H1 (cell line): ENCODE measurements at regions of chr4 and their contacts with region 1.

Region 1: DNA sequence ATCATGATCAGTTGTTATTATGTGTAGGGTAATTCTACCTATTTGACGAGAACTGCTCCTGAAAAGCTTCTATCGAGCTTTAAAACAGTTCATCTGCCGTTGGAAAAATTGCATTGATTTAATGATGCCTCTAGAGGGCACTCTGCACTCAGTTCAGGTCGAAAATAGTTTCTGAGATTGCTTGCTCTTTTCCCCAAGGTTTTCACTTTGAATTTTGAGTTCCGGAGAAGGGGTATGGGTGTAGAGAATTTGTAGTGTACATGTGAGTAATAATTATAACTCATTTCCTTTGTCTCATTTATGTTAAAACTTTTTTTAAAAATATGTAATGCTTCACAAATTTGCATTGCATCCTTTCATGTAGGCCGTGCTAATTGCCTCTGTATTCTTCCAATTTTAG is 28.4 kb upstream of the TNIP3 start:
- DNase-seq: no peak
- H3K4me3 ChIP-seq: no peak overlapping the region
- H3K27ac ChIP-seq: no peak overlapping the region
- H3K4me1 ChIP-seq: peaks cover 0 to 5% (median 0%) of the 10 kb centered on the region in 4 experiments; a peak in 2 of 7 replicates
- H3K27me3 ChIP-seq: no peaks in the 10 kb centered on the region
- CTCF ChIP-seq: peak in 2 of 3 experiments; percentile 70 to 82; a peak in 3 of 4 replicates
- EP300 ChIP-seq: no peak
- POLR2A ChIP-seq: no peak
- RAD21 ChIP-seq: peak; percentile 87 to 90

Region 2: GRCh38 chr4:121050300-121050699 is 142.2 kb before region 1 on chr4:
- CTCF ChIA-PET with region 1: no interaction called
- POLR2A ChIA-PET with region 1: no interaction called
- DNase-seq: no peak
- H3K4me3 ChIP-seq: no peak overlapping the region
- H3K27ac ChIP-seq: no peak overlapping the region
- H3K4me1 ChIP-seq: no peaks in the 10 kb centered on the region
- H3K27me3 ChIP-seq: no peaks in the 10 kb centered on the region
- CTCF ChIP-seq: peak in 1 of 3 experiments; percentile 29; a peak in 1 of 4 replicates
- EP300 ChIP-seq: no peak
- POLR2A ChIP-seq: no peak
- RAD21 ChIP-seq: peak; percentile 15 to 29; a peak in 2 of 4 replicates

Region 3: GRCh38 chr4:121156822-121157769 is 35.4 kb before region 1 on chr4:
- CTCF ChIA-PET with region 1: interaction called, 11 read pairs
- POLR2A ChIA-PET with region 1: interaction called, 4 read pairs
- DNase-seq: peak; percentile 19 to 81
- H3K4me3 ChIP-seq: peak overlapping the region; percentile 23 to 72 (median 60)
- H3K27ac ChIP-seq: no peak overlapping the region
- H3K4me1 ChIP-seq: peaks cover 0 to 5% (median 0%) of the 10 kb centered on the region in 4 experiments; a peak in 2 of 7 replicates
- H3K27me3 ChIP-seq: peaks cover 1 to 8% (median 5%) of the 10 kb centered on the region in 4 experiments; a peak in 5 of 7 replicates
- CTCF ChIP-seq: no peak
- EP300 ChIP-seq: no peak
- POLR2A ChIP-seq: no peak
- RAD21 ChIP-seq: no peak

Region 4: DNA sequence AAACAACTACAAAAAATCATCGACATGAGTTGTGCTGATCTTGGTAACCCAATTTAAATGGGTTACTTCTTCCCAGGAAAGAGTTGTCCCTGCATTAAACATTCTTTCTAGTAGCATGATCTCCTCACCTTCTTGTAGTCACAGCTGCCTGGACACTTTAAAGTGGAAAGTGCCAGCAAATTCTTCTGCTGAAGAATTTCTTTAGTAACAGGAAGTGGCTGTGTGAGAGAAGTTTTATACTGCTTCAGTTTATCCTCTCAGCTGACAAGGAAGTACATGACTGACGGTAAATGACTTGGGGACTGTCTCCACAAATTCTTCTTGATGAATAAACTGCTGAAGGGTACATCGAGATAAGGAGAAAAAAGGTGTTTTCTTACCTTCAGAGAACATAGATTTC is 10.2 kb before region 1 on chr4:
- CTCF ChIA-PET with region 1: interaction called, 22 read pairs
- POLR2A ChIA-PET with region 1: no interaction called
- DNase-seq: no peak
- H3K4me3 ChIP-seq: no peak overlapping the region
- H3K27ac ChIP-seq: no peak overlapping the region
- H3K4me1 ChIP-seq: peaks cover 0 to 6% (median 3%) of the 10 kb centered on the region in 4 experiments; a peak in 2 of 7 replicates
- H3K27me3 ChIP-seq: no peaks in the 10 kb centered on the region
- CTCF ChIP-seq: no peak
- EP300 ChIP-seq: no peak
- POLR2A ChIP-seq: no peak
- RAD21 ChIP-seq: no peak

Region 5: DNA sequence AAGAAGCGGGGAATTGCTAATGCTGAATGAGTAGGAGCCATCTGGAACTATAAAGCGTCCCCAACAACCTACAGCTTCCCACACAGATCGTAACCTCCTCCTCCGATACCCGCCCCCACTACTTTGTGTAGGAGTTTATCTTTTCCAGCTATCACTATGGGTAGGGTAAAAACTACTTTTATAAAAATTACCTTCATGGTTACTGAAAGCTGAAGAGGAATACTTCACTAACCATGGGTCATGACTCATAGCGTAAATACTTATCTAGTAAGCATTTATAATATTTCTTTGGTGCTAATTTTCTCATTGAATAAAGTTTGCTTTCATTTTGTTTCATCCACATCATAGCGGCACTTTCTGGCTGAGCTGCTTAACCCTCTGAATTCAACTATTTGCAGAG is 51.0 kb after region 1 on chr4:
- CTCF ChIA-PET with region 1: interaction called, 65 read pairs
- POLR2A ChIA-PET with region 1: no interaction called
- DNase-seq: no peak
- H3K4me3 ChIP-seq: no peak overlapping the region
- H3K27ac ChIP-seq: no peak overlapping the region
- H3K4me1 ChIP-seq: no peaks in the 10 kb centered on the region
- H3K27me3 ChIP-seq: no peaks in the 10 kb centered on the region
- CTCF ChIP-seq: no peak
- EP300 ChIP-seq: no peak
- POLR2A ChIP-seq: no peak
- RAD21 ChIP-seq: no peak

Region 6: GRCh38 chr4:121307445-121308327 is 115.2 kb after region 1 on chr4:
- CTCF ChIA-PET with region 1: interaction called, 20 read pairs
- POLR2A ChIA-PET with region 1: no interaction called
- DNase-seq: peak in 1 of 2 experiments; percentile 7
- H3K4me3 ChIP-seq: no peak overlapping the region
- H3K27ac ChIP-seq: no peak overlapping the region
- H3K4me1 ChIP-seq: no peaks in the 10 kb centered on the region
- H3K27me3 ChIP-seq: no peaks in the 10 kb centered on the region
- CTCF ChIP-seq: peak in 2 of 3 experiments; percentile 83 to 85; a peak in 3 of 4 replicates
- EP300 ChIP-seq: no peak
- POLR2A ChIP-seq: no peak
- RAD21 ChIP-seq: peak; percentile 94 to 95